ENCODE measurements at regions of chr1 and their contacts with region 1.

Region 1: GRCh38 chr1:203609979-203610493 is 16.6 kb upstream of the ATP2B4 start:
- DNase-seq: no peak
- ATAC-seq: no peak
- H3K4me3 ChIP-seq: no peak overlapping the region
- H3K27ac ChIP-seq: no peak overlapping the region
- H3K4me1 ChIP-seq: peaks cover 12 to 15% of the 10 kb centered on the region in 2 experiments; a peak in 4 of 5 replicates
- H3K27me3 ChIP-seq: no peaks in the 10 kb centered on the region; a peak in 1 of 5 replicates
- CTCF ChIP-seq: no peak
- EP300 ChIP-seq: no peak
- POLR2A ChIP-seq: no peak
- RAD21 ChIP-seq: no peak

Region 2: DNA sequence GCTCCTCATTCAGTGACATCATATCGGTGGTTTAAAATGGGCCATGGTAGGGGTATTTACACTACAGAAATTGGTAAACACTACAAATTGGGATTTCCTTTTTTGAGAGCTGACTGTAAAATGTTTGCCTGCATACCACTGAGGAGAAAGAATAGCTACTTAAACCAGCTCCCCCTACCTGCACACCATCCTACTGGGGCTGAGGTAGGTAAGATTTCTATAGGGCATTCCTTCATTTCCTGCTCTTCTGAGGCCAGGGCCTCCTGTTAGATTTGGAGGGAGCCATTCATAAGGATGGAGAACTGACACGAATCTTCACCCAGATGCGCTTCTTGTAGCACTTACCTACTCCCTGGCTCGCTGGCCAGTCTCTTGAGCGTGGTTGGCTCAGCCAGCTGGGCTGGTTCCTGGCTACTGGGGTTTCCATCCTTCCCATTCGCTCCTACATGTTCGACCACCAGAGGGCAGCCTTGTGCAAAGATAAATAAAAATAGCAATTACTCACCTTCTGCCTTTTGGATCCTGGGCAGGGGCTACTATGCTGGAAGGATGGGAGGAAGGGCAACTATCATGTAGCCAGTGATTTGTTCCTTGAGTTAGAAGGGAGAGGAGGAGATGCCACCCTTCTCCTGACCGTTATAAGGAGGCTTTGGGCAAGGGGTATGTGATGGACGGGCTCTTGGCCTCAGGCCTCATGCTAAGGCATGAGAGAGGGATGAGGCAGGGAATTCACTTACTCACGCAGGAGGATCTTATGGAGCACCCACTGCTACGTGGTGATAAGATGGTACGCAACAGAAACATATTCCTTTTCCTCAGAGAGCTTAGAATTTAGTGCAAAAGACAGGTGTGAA is 105.4 kb before region 1 on chr1:
- CTCF ChIA-PET with region 1: no interaction called
- POLR2A ChIA-PET with region 1: no interaction called
- in situ Hi-C with region 1: no loop called
- intact Hi-C with region 1: loop called (anchors 5 kb)
- DNase-seq: peak; percentile 85 to 88 (median 86)
- ATAC-seq: peak; percentile 88
- H3K4me3 ChIP-seq: no peak overlapping the region
- H3K27ac ChIP-seq: no peak overlapping the region
- H3K4me1 ChIP-seq: no peaks in the 10 kb centered on the region
- H3K27me3 ChIP-seq: peaks cover 19 to 53% of the 10 kb centered on the region in 2 experiments
- CTCF ChIP-seq: peak; percentile 76 to 92 (median 85)
- EP300 ChIP-seq: no peak
- POLR2A ChIP-seq: no peak
- RAD21 ChIP-seq: peak; percentile 93 to 94

Region 3: GRCh38 chr1:203526572-203526971 is 83.5 kb before region 1 on chr1:
- CTCF ChIA-PET with region 1: no interaction called
- POLR2A ChIA-PET with region 1: no interaction called
- in situ Hi-C with region 1: loop called (anchors 5 kb)
- intact Hi-C with region 1: no loop called
- DNase-seq: no peak
- ATAC-seq: no peak
- H3K4me3 ChIP-seq: no peak overlapping the region
- H3K27ac ChIP-seq: no peak overlapping the region
- H3K4me1 ChIP-seq: no peaks in the 10 kb centered on the region
- H3K27me3 ChIP-seq: peaks cover 32 to 77% of the 10 kb centered on the region in 2 experiments
- CTCF ChIP-seq: no peak
- EP300 ChIP-seq: no peak
- POLR2A ChIP-seq: no peak
- RAD21 ChIP-seq: no peak

Region 4: DNA sequence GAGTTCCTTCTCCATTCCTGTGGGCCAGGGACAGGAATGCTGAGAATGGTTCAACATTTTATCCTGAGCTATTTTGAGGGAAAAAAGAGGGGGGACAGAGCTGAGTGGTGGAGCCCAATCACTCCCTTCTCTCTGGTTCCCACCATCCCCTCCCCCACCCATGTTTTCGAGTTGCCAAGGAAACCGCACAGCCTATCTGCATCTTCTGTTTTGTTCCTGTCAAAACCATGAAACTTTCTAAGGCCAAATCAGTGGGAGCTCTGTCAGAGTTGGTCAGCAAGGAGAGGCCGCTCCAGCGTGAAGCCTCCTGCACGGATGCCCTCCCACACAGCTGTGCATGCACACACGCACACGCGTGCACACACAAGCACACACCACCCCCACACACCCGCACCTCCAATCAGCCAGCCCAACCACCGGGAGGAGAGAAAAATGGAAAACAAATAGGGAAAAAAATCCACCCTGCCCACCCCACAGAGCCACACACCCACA is 37.9 kb before region 1 on chr1:
- CTCF ChIA-PET with region 1: no interaction called
- POLR2A ChIA-PET with region 1: no interaction called
- in situ Hi-C with region 1: no loop called
- intact Hi-C with region 1: no loop called
- DNase-seq: peak in 2 of 4 experiments; percentile 18 to 36
- ATAC-seq: peak; percentile 56
- H3K4me3 ChIP-seq: no peak overlapping the region
- H3K27ac ChIP-seq: no peak overlapping the region
- H3K4me1 ChIP-seq: peaks cover 0 to 4% of the 10 kb centered on the region in 2 experiments; a peak in 1 of 5 replicates
- H3K27me3 ChIP-seq: peaks cover 54 to 86% of the 10 kb centered on the region in 2 experiments
- CTCF ChIP-seq: no peak
- EP300 ChIP-seq: no peak
- POLR2A ChIP-seq: no peak
- RAD21 ChIP-seq: no peak

Region 5: DNA sequence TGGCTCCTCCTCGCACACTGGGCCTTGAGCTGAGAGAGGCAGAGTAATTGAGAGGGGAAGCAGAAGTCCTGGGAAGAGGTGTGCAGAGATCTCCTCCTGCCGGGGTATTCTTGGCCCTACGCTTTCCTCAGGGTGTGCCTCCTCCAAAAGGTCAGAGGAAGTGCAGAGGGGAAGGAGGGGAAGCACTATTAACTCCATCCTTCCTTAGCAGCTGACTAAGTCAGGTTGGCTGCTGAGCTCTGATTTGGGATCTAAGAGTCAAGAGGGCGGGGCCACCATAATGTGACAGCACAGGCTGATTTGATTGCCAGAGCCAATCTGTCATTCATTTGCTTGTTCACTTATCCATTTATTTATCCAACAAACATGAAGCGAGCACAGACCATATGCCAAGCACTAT is 28.9 kb after region 1 on chr1:
- CTCF ChIA-PET with region 1: interaction called, 4 read pairs
- POLR2A ChIA-PET with region 1: no interaction called
- in situ Hi-C with region 1: no loop called
- intact Hi-C with region 1: loop called (anchors 1 kb)
- DNase-seq: peak in 2 of 4 experiments; percentile 50 to 57
- ATAC-seq: peak; percentile 79
- H3K4me3 ChIP-seq: no peak overlapping the region
- H3K27ac ChIP-seq: no peak overlapping the region
- H3K4me1 ChIP-seq: peaks cover 11 to 21% of the 10 kb centered on the region in 2 experiments; a peak in 4 of 5 replicates
- H3K27me3 ChIP-seq: no peaks in the 10 kb centered on the region; a peak in 1 of 5 replicates
- CTCF ChIP-seq: peak; percentile 14 to 64 (median 35); a peak in 4 of 6 replicates
- EP300 ChIP-seq: 0 out of 2 replicates have a peak, but pooled peaks have one; percentile 3
- POLR2A ChIP-seq: no peak
- RAD21 ChIP-seq: peak; percentile 67 to 87